ENCODE measurements at regions of chr5 and their contacts with region 1.

Region 1: DNA sequence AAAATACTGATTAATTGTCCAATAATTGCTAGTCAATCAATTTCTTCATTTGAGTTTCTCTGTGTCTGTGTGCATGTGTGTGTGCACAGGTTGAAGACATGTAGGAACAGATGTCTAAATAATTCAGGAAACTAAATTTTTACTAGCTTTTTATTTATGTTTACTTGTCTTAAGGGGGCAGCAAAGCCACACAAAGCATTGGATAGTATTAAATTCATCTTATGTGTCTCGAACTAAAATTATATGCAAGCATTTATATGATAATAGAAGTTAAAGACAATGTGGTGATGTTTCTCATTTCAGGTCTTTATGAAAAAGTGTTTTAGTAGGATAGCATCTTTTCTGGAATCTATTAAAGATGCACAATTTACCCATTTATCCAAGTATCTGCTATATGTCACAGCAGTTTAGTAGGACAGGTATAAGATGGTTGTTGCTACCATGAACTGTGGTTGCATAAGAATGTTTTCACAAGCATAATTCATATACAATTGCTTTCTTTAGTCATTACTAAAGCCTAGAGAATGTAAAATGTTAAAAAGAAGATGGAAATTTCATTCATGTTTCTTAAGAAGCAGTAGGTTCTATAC is 784.6 kb upstream of the NUDT12 start:
- DNase-seq: no peak
- H3K4me3 Mint-ChIP-seq: no peak overlapping the region
- H3K27ac Mint-ChIP-seq: no peak overlapping the region
- H3K4me1 Mint-ChIP-seq: no peaks in the 10 kb centered on the region
- H3K27me3 Mint-ChIP-seq: no peaks in the 10 kb centered on the region

Region 2: DNA sequence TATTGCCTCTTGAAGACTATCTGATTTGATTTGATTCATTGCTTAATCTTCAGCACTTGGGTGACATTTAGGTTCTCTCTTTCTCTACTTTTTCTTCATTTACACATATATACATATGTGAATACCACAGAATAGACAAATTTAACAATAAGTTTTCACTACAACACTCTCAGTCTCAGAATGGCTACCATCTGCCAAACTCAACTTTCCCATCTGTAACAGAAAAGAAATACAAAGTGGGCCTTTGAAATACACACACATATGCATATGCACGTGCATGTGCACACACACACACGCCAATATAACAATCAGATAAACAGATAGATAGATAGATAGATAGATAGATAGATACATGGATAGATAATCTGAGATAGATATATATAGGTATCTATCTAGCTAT is 21.9 kb before region 1 on chr5:
- intact Hi-C with region 1: loop called (anchors 1 kb)
- DNase-seq: no peak
- H3K4me3 Mint-ChIP-seq: no peak overlapping the region
- H3K27ac Mint-ChIP-seq: no peak overlapping the region
- H3K4me1 Mint-ChIP-seq: no peaks in the 10 kb centered on the region
- H3K27me3 Mint-ChIP-seq: no peaks in the 10 kb centered on the region

Region 3: GRCh38 chr5:104456122-104456521 is 108.9 kb after region 1 on chr5:
- intact Hi-C with region 1: no loop called
- DNase-seq: no peak
- H3K4me3 Mint-ChIP-seq: no peak overlapping the region
- H3K27ac Mint-ChIP-seq: no peak overlapping the region
- H3K4me1 Mint-ChIP-seq: no peaks in the 10 kb centered on the region
- H3K27me3 Mint-ChIP-seq: no peaks in the 10 kb centered on the region

Region 4: DNA sequence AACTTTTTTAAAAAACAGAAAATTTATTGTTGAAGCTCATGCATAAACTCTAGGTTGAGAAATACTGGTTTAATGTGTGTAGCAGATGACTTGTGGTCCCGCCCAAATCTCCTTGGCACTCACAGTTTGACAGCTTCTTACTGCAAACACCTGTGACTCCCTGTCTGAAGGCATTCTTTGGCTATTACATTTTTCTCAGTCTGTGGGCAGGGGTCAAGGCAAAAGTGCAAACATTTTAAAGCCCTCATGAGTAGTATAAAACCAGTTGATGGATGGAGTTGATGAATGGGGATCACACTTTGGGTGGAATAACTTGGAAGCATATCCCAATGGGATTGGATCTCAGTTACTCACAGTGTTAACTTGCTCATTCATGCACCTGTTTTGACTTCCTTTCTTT is 222.4 kb after region 1 on chr5:
- intact Hi-C with region 1: no loop called
- DNase-seq: no peak
- H3K4me3 Mint-ChIP-seq: no peak overlapping the region
- H3K27ac Mint-ChIP-seq: no peak overlapping the region
- H3K4me1 Mint-ChIP-seq: no peaks in the 10 kb centered on the region
- H3K27me3 Mint-ChIP-seq: no peaks in the 10 kb centered on the region

Region 5: DNA sequence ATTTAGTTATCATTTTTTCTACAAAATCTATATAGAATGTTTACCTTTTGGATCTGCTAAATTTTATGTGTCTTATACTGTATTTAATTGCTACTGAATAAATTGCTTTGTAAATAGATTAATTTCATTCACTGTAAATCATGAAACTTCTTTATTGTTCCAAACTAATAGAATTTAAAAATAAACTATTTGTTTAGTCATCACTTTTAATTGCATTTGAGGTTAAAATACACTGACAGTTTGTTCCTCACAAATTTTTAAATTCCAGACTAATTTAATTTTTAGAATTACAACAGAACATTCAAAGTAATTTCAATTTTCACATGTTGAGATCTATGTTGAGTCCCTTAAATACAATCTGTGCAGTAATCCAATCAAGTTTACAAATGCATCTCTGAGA is 848.6 kb after region 1 on chr5:
- intact Hi-C with region 1: no loop called
- DNase-seq: no peak
- H3K4me3 Mint-ChIP-seq: no peak overlapping the region
- H3K27ac Mint-ChIP-seq: no peak overlapping the region
- H3K4me1 Mint-ChIP-seq: no peaks in the 10 kb centered on the region
- H3K27me3 Mint-ChIP-seq: no peaks in the 10 kb centered on the region